Right ventricle myocardium inferior (tissue), 1 donor: ENCODE measurements at regions of chr6 and their contacts with region 1.

Region 1: GRCh38 chr6:110682460-110682853 is 132.8 kb downstream of the CDK19 start:
- DNase-seq: no peak
- ATAC-seq: peak; percentile 98

Region 2: DNA sequence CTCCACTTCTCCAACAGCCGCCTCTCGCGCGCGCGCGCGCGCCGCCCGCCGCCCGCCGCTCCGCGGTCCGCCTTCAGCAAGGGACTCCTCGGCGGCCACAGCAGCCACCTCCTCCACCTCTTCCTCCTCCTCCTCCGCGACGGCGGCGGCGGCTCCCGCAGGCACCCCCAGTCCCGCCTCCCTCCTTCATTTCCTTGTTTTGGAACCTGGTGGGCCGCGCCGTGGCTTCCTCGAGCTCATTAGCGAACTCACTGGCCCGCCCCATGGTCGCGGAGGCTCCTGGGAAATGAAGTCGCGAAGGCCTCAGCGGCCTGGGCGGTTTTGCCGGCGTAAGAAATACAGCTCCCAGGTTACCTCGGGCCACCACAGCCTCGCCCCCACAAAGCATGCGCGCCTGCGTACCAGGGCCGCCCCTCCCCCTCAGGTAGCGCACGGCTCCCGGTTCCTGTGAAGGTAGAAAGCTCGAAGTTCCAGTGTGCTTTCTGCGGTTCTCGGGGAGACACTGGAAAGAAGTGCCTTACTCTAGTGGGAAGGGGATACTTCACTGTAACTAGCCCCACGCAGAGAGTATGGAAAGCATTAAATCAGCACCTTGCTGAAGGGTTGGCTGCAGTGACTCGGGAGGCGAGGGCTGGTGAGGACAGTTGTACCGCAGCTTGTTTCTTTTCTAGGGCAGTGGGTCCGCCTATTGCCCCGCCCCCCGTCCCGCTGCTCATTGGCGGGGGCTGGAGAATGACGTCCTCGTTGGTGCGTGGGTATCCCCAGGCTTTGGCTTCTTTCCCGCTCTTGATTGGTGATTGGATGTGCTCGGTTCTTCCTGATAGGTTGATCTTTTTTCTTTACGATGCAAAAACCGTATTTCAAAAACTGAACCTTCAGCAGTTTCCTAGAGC is 133.0 kb after region 1 on chr6 and contains the start of gene CDK19:
- intact Hi-C with region 1: loop called (anchors 5 kb)
- DNase-seq: peak; percentile 100
- ATAC-seq: peak; percentile 98
- total RNA-seq, gene CDK19: 11.5 TPM

Region 3: GRCh38 chr6:110873981-110874879 is 191.8 kb after region 1 on chr6 and contains the start of gene AMD1:
- intact Hi-C with region 1: loop called (anchors 5 kb)
- DNase-seq: peak; percentile 99
- ATAC-seq: peak; percentile 91
- total RNA-seq, gene AMD1: 84.9 TPM

Region 4: DNA sequence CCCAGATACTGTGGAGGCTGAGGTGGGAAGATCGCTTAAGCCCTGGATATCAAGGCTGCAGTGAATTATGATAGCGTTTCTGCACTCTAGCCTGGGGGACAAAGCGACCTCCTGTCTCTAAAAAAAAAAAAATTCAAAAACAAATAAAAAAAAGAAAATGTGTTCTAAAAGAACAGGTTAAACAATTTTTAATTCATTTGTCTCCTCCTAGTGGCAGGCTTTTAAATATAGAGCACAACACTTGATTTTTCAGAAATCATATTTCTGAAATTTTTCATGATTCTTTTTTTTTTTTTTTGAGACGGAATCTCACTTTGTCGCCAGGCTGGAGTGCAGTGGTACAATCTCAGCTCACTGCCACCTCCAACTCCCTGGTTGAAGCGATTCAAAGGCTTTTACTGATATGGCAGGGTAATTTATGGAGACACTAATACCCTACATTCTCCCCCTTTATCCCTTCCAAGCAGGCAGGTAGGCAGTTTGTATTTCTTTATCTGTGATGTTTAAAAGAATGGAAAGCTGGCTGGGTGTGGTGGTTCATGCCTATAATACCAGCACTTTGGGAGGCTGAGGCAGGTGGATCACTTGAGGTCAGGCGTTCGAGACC is 267.3 kb after region 1 on chr6:
- intact Hi-C with region 1: loop called (anchors 1 kb)
- DNase-seq: no peak
- ATAC-seq: no peak

Region 5: GRCh38 chr6:110999634-111000270 is 317.3 kb after region 1 on chr6:
- intact Hi-C with region 1: loop called (anchors 5 kb)
- DNase-seq: no peak
- ATAC-seq: no peak